Aorta (tissue), 5 donors: ENCODE measurements at regions of chr17 and their contacts with region 1.

Region 1: DNA sequence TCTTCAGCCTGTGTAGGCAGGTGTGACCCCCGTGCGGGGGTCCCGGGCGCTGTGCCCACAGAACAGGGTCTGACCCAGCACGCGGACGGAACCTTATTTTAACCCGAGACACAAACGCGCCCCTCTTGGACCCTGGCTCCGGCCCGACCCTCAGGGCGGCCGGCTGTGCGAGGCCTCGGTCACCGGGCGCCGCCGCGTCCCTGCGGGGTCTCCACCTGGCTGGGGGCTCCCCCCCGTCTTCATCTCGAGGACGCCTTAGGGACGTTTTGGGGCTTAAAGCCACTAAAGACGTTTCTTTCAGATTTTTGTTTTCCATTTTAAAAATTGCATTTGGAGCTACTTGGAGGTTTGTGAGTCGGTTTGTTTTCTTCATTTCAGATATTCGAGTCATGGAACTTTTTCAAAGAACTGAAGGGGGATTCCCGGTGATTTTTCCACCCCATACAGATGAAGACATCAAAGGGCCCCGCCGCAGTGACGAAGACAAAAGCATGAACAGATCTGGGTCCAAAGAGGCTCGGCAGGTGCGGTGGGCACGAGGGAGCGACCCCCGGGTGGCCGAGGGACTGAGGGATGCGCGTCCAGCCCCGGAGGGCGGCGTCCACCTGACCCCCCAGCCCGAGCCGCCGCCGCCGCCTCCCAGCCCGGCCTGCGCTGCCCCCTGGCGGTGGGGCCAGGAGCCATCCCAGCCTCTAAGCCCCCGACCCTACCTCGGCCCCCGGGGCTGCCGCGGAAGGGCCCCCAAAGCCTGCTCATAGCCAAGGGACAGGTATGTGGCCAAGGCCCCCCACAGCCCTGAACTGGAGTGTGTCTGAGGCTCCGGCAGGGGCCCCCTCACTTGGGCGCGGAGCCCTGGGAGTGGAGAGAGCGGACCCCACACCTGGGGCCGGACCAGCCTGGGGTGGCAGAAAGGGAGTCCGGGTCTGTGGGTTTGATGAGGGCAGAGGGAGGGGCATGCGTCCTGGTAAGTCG is 3.8 kb upstream of the CD7 start:
- DNase-seq: peak in 1 of 2 donors; percentile 53
- ATAC-seq: peak; percentile 52
- H3K4me3 ChIP-seq: no peak overlapping the region
- H3K27ac ChIP-seq: no peak overlapping the region
- H3K4me1 ChIP-seq: no peaks in the 10 kb centered on the region
- H3K27me3 ChIP-seq: no peaks in the 10 kb centered on the region

Region 2: GRCh38 chr17:82037113-82037888 is 283.9 kb before region 1 on chr17 and contains the start of gene DCXR:
- intact Hi-C with region 1: loop called (anchors 10 kb)
- DNase-seq: peak; percentile 98 to 99
- ATAC-seq: peak; percentile 97
- H3K4me3 ChIP-seq: peak within 1 kb of the TSS; percentile 15 to 22
- H3K27ac ChIP-seq: peak within 1 kb of the TSS; percentile 20 to 85
- H3K4me1 ChIP-seq: no peaks in the 10 kb centered on the region
- H3K27me3 ChIP-seq: no peaks in the 10 kb centered on the region
- total RNA-seq, gene DCXR: 34.9 to 62.2 TPM

Region 3: GRCh38 chr17:82205719-82206508 is 115.3 kb before region 1 on chr17:
- intact Hi-C with region 1: loop called (anchors 2 to 5 kb)
- DNase-seq: peak; percentile 90 to 93
- ATAC-seq: peak; percentile 89
- H3K4me3 ChIP-seq: no peak overlapping the region
- H3K27ac ChIP-seq: no peak overlapping the region
- H3K4me1 ChIP-seq: no peaks in the 10 kb centered on the region
- H3K27me3 ChIP-seq: no peaks in the 10 kb centered on the region

Region 4: GRCh38 chr17:82236142-82236981 is 84.9 kb before region 1 on chr17:
- intact Hi-C with region 1: loop called (anchors 2 to 5 kb)
- DNase-seq: peak; percentile 62 to 89
- ATAC-seq: peak; percentile 34
- H3K4me3 ChIP-seq: no peak overlapping the region
- H3K27ac ChIP-seq: no peak overlapping the region
- H3K4me1 ChIP-seq: no peaks in the 10 kb centered on the region
- H3K27me3 ChIP-seq: no peaks in the 10 kb centered on the region

Region 5: DNA sequence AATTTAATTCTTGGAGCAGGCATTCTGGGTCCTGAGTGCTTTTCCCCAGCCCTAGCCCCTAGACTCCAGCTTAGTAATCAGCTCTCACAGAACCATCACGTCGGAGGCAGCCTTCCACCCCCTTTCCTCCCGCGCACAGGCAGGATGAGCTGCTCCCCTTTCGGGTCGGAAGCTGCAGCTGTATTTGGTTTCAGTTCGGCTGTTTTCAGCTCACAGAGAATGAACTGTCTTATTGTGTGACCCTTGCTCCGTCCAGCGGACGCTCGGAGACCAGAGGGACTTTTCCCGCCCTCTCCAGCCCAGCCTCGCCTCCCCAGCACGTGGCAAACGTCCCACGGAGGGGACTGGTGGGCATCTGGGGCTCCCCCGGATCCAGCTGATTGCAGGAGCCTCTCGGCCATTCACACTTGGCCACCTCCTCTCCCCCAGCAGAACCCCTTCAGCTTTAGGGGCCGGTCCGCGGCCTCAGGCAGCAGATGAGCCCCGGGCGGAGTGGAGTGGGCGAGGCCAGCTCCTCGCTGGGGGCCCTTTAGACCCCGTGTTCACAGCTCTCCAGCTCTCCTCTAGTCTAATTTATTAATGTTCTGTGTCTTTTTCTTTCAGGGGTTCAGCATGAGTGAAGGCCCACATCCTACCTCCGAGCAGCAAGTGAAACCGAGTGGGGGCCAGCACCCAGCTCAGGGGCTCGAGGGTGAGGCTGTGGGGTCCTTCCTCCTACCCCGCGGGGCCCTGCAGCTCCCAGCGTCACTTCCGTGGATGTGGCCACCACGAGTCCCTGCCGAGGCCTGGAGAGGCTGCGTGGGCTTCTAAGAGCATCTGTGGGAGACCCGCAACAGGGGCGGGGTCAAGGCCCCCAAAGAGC is 49.5 kb after region 1 on chr17:
- intact Hi-C with region 1: no loop called
- DNase-seq: no peak
- ATAC-seq: peak; percentile 8
- H3K4me3 ChIP-seq: peak overlapping the region in 1 of 2 donors; percentile 1
- H3K27ac ChIP-seq: no peak overlapping the region
- H3K4me1 ChIP-seq: no peaks in the 10 kb centered on the region
- H3K27me3 ChIP-seq: no peaks in the 10 kb centered on the region